Right ventricle myocardium inferior (tissue), 1 donor: ENCODE measurements at regions of chr19 and their contacts with region 1.

Region 1: GRCh38 chr19:39445265-39446111 is at the start of gene SUPT5H:
- DNase-seq: peak; percentile 98
- ATAC-seq: peak; percentile 98
- total RNA-seq, gene SUPT5H: 80.6 TPM

Region 2: DNA sequence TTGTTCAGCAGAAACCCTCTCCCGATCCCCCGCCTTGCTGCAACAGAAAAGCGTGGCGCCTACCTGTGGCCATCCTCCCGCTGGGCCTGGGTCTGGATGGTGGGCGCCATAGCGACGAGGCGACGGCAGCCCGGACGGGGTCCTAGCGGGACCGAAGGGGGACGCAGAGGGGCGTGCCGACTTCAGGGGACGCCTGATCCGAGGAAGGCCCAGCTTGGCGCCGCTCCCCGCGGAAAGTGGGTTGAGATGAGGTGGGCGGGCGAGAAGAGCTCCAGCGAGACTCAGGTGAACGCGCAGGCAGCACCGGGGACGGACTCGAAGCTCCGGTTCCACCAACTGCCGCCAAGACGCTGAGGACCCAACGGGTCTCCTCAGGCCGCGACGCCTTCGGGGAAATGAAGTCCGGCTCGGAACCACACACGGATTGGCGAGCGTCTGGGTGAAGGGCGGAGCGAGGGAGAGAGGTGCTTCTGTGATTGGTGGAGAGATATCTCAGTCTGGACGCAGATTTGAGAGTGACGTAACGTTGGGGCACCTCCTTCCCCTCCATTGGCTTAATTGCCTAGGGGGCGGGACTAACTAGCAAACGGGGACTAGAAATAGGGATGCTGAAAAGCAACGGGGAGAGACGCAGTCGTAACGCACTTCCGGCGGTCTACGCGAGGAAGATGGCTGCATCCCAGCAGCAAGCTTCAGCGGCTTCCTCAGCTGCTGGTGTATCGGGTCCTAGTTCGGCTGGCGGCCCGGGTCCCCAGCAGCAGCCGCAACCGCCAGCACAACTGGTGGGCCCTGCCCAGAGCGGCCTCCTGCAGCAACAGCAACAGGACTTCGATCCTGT is 54.5 kb before region 1 on chr19 and contains the starts of genes MED29 and PAF1:
- intact Hi-C with region 1: loop called (anchors 1 kb)
- DNase-seq: peak; percentile 97
- ATAC-seq: peak; percentile 97
- total RNA-seq, gene MED29: 21.8 TPM
- total RNA-seq, gene PAF1: 34.5 TPM

Region 3: DNA sequence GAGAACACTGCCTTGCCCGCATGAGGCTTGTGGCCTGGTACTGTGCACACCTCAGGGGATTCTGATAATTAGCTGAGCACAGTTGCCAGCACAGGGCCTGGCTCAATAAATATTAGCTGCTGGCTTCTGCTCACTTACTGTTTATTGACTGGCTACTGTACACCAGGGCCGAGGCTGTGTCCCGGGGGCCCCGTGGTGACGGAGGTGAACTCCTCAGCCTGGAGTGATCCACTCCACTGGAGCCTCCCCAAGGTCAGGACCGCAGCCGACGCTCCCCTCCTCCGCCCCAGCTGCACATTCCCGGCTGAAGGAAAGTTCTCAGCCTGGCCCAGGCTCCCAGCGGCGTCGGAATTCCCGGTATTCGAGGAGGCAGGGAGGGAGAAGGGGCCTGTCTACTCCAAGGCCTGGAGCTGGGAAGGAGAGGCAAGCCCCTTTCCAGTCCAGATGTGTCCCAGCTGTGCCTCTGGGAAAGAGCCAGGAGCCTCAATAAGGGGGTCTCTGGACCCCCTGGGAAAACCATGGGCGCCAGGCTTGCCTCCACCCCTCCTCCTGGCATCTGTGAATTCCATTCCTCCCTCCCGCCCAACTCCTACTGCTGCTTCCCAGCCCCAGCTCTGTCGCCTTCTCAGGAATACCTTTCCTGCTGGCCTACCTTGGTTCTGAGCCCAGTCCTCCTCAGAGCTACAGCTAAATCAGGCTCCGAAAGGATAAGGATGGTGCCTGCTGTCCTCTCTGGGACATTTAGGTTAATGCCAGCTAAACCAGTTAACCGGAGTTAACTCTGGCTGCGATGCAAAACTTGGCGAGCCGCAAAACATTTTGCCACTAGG is 17.0 kb before region 1 on chr19:
- intact Hi-C with region 1: no loop called
- DNase-seq: peak; percentile 78
- ATAC-seq: peak; percentile 89

Region 4: GRCh38 chr19:39480337-39481228 is 35.1 kb after region 1 on chr19 and contains the start of gene TIMM50:
- intact Hi-C with region 1: loop called (anchors 2 kb)
- DNase-seq: peak; percentile 99
- ATAC-seq: peak; percentile 98
- total RNA-seq, gene TIMM50: 75.9 TPM

Region 5: GRCh38 chr19:39568604-39569003 is 123.1 kb after region 1 on chr19:
- intact Hi-C with region 1: no loop called
- DNase-seq: no peak
- ATAC-seq: no peak

Region 6: DNA sequence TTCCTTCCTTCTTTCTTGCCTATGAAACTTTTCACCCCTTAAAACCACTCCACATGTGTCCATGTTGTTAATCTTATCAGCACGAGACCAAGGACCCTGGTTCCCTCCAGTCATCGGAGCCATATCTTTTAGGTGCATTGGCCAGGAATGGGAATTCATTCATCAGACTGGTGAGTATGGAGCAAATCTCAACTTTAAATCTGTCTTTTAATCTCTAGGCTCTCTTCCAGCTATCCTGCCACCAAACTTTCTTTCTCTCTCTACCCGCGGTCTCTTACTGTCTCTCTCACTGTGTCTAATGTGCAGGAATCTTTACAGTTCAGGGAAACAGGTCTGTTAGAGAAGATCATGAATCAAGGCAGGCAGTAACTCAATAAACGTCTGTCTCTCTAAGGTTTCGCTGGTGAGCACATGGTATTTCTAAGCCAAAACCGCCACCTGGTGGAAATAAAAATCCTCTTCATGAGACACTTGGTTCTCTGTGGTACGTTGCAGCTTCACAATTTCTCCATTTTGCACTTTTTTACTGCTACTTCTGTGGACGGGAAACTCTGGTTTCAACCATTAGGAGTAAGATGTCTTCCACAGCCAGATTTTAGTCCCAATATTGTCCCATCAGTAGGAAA is 226.4 kb after region 1 on chr19:
- intact Hi-C with region 1: loop called (anchors 5 kb)
- DNase-seq: no peak
- ATAC-seq: no peak